ENCODE measurements at regions of chr2 and their contacts with region 1.

Region 1: DNA sequence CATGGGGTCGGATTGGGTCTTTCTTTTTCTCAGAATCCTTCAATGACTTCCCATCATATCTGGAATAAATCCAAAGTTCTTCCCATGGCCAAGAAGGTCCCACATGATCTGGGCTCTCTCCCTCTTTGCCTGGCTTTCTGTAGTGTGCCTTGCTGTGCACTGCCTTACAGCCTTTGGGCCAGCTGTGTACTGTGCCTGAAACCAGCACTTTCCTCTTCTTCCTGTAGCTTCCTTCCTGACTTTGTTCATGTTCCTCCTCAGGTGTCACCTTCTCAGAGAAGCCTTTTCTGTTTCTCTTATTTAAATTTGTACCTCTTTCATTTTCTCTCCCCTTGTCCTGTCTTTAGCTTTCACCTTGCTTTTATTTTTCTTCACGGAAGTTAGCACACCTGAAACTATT is 4.3 kb upstream of the CDCA7 start:
- DNase-seq: no peak
- ATAC-seq: no peak
- H3K4me3 ChIP-seq: no peak overlapping the region
- H3K4me3 Mint-ChIP-seq: no peak overlapping the region
- H3K27ac ChIP-seq: no peak overlapping the region
- H3K27ac Mint-ChIP-seq: no peak overlapping the region
- H3K4me1 ChIP-seq: peaks cover 9% of the 10 kb centered on the region
- H3K4me1 Mint-ChIP-seq: peaks cover 9% of the 10 kb centered on the region
- H3K27me3 ChIP-seq: peaks cover 0 to 10% of the 10 kb centered on the region in 2 experiments
- H3K27me3 Mint-ChIP-seq: peaks cover 30% of the 10 kb centered on the region
- CTCF ChIP-seq: no peak

Region 2: DNA sequence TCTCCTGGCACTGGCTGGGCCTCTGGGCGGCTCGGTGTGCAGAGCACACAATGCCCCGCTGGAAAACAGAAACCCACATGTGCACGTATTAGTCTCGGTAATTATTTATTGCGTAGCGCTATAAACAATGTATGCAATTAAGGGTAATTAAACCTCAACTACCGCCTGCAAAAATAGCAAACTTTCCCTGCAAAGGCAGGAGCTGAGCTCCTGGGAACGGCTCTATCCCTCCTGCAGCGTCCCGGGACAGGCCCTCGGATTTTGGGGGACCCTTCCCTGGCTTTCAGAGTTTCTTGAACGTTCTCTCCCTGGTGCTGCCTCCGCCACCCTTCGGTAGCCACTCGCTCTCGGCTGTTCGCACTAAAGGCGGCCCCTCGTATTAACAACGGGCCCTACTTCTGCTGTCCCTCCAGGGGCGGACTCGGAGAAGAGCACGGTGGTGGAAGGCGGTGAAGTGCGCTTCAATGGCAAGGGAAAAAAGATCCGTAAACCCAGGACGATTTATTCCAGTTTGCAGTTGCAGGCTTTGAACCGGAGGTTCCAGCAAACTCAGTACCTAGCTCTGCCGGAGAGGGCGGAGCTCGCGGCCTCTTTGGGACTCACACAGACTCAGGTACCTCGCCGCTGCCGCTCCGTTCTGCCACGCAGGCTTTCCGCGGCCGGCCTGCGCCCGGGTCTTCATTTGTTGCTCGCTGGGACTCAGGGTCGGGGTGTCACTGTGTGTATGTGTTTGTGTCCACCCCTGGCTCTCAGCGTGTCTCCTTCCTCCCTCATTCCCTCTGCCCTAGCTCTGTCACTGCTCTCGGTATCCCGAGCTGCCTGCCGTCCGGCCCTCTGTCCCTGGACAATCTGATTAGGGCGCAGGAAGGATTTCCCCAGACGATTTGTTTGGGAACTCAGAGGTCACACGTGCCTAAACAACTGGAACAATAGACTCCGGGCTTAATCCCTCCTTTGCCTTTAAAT is 1263.9 kb before region 1 on chr2:
- CTCF ChIA-PET with region 1: no interaction called
- POLR2A ChIA-PET with region 1: no interaction called
- intact Hi-C with region 1: no loop called
- DNase-seq: peak in 6 of 9 experiments; percentile 52 to 78 (median 67)
- ATAC-seq: peak; percentile 64
- H3K4me3 ChIP-seq: no peak overlapping the region
- H3K4me3 Mint-ChIP-seq: peak overlapping the region; percentile 39
- H3K27ac ChIP-seq: no peak overlapping the region
- H3K27ac Mint-ChIP-seq: no peak overlapping the region
- H3K4me1 ChIP-seq: peaks cover 48% of the 10 kb centered on the region
- H3K4me1 Mint-ChIP-seq: peaks cover 45% of the 10 kb centered on the region
- H3K27me3 ChIP-seq: peaks cover 96% of the 10 kb centered on the region in 2 experiments
- H3K27me3 Mint-ChIP-seq: peaks cover 88% of the 10 kb centered on the region
- CTCF ChIP-seq: no peak

Region 3: GRCh38 chr2:173286153-173286809 is 64.1 kb before region 1 on chr2:
- CTCF ChIA-PET with region 1: no interaction called
- POLR2A ChIA-PET with region 1: interaction called, 10 read pairs
- intact Hi-C with region 1: no loop called
- DNase-seq: peak in 1 of 9 experiments; percentile 11
- ATAC-seq: no peak
- H3K4me3 ChIP-seq: no peak overlapping the region
- H3K4me3 Mint-ChIP-seq: no peak overlapping the region
- H3K27ac ChIP-seq: no peak overlapping the region
- H3K27ac Mint-ChIP-seq: no peak overlapping the region
- H3K4me1 ChIP-seq: no peaks in the 10 kb centered on the region
- H3K4me1 Mint-ChIP-seq: no peaks in the 10 kb centered on the region
- H3K27me3 ChIP-seq: peaks cover 0 to 4% of the 10 kb centered on the region in 2 experiments
- H3K27me3 Mint-ChIP-seq: no peaks in the 10 kb centered on the region
- CTCF ChIP-seq: no peak

Region 4: DNA sequence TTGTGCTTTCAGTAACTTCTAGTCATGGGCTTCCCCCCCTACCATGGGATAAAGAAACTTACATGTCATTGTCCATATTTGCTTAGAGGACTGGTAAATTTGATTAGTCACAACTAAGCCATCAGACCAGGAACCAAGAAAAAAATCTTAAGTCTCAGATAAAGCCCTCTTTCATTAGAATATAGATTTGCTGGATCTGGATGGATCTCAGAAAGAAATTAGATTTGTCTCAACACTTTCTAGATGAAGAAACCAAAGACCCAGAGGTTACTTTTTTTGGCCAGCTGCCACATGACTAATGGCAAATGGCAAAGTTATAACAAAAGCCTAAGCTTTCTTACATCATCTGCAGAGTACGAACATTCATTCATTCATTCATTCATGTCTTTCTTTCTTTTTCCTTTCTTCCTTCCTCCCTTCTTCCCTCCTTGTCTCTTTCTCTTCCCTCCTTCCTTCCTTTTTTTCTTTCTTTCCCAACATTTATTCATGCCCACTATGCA is 64.5 kb after region 1 on chr2:
- CTCF ChIA-PET with region 1: no interaction called
- POLR2A ChIA-PET with region 1: no interaction called
- intact Hi-C with region 1: no loop called
- DNase-seq: no peak
- ATAC-seq: no peak
- H3K4me3 ChIP-seq: no peak overlapping the region
- H3K4me3 Mint-ChIP-seq: no peak overlapping the region
- H3K27ac ChIP-seq: no peak overlapping the region
- H3K27ac Mint-ChIP-seq: no peak overlapping the region
- H3K4me1 ChIP-seq: no peaks in the 10 kb centered on the region
- H3K4me1 Mint-ChIP-seq: no peaks in the 10 kb centered on the region
- H3K27me3 ChIP-seq: no peaks in the 10 kb centered on the region
- H3K27me3 Mint-ChIP-seq: peaks cover 19% of the 10 kb centered on the region
- CTCF ChIP-seq: no peak

Measured in CD8-positive, alpha-beta T cell (primary cell).